Naive thymus-derived CD4-positive, alpha-beta T cell (primary cell): ENCODE measurements at regions of chr1 and their contacts with region 1.

Region 1: DNA sequence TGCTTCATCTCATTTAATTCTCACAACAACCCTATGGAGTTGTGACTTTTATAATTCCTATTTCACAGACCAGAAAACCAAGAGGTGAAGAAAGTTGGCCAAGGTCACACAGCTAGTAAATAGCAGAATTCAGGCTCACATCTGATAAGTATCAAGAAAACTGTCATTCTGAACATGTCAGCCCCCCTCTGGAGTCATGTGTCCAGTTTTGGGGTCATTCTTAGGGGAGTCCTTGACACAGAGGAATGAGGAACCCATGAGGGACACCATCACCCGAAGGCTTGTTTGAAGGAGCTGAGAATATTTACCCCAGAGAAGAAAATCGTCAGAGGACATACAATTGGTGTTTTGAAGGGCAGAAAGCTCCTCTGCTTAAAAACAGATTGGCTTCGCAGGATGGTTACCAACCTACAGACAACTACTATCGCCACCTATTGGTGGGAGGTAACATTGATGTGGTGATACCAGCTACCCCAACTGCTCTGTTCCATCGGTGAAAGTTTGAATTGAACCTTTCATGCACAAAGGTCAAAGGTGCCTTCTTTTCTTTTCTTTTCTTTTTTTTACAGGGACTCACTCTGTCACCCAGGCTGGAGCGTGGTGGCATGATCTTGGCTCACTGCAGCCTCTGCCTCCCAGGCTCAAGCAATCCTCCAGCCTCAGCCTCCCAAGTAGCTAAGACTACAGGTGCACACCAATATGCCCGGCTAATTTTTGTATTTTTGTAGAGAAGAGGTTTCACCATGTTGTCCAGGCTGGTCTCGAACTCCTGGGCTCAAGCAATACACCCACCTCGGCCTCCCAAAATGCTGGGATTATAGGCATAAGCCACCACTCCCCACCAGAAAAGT is 31.3 kb downstream of the NCMAP start:
- DNase-seq: peak in 8 of 9 donors; percentile 32 to 83 (median 76)
- ATAC-seq: peak; percentile 98
- H3K4me3 ChIP-seq: no peak overlapping the region
- H3K4me3 Mint-ChIP-seq: peak overlapping the region in 4 of 10 donors; percentile 12 to 38 (median 35)
- H3K27ac ChIP-seq: peak overlapping the region; percentile 35
- H3K27ac Mint-ChIP-seq: peak overlapping the region in 8 of 9 donors; percentile 78 to 93 (median 85)
- H3K4me1 ChIP-seq: peaks cover 0 to 7% of the 10 kb centered on the region in 2 donors
- H3K4me1 Mint-ChIP-seq: peaks cover 0 to 9% (median 7%) of the 10 kb centered on the region in 7 donors
- H3K27me3 ChIP-seq: no peaks in the 10 kb centered on the region
- H3K27me3 Mint-ChIP-seq: peaks cover 0 to 14% (median 0%) of the 10 kb centered on the region in 5 donors

Region 2: DNA sequence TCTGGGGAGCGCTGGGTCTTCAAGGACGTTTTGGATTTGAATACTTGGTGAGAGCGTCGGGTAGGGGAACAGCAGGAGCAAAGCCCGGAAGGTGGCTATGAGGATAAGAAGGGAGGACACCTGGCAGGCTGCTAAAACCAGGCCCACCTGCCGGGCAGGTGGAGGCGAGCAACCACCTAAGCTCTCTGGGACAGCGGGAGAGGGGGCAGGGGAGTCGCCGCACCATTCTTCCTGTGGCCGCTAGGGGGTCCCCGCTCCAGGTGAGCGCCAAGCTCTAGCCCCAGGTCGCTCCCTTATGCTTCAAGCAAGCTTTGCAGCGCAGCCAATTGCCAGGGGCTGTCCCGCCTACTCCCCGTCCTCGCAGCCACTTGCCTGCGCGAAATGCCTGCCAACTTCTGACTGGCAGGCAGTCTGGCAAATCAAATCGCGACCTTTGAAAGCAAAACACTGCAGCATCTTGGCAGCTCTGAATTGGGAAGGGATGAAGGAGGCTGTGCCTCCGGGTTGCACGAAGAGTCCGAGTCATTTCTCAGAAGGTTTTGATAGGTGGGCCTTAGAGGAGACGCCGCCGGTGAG is 171.8 kb before region 1 on chr1 and contains the start of gene NIPAL3:
- CTCF ChIA-PET with region 1: interaction called, 16 read pairs
- POLR2A ChIA-PET with region 1: interaction called, 6 read pairs
- intact Hi-C with region 1: loop called (anchors 1 kb)
- DNase-seq: peak; percentile 81 to 99 (median 97)
- ATAC-seq: peak; percentile 98
- H3K4me3 ChIP-seq: peak within 1 kb of the TSS; percentile 76
- H3K4me3 Mint-ChIP-seq: peak within 1 kb of the TSS; percentile 95 to 100 (median 98)
- H3K27ac ChIP-seq: peak within 1 kb of the TSS; percentile 74
- H3K27ac Mint-ChIP-seq: peak within 1 kb of the TSS; percentile 75 to 99 (median 90)
- H3K4me1 ChIP-seq: peaks cover 23 to 44% of the 10 kb centered on the region in 2 donors
- H3K4me1 Mint-ChIP-seq: peaks cover 51 to 91% (median 75%) of the 10 kb centered on the region in 7 donors
- H3K27me3 ChIP-seq: no peaks in the 10 kb centered on the region
- H3K27me3 Mint-ChIP-seq: no peaks in the 10 kb centered on the region
- total RNA-seq, gene NIPAL3: 35.5 to 65.0 (median 54.5) TPM

Region 3: DNA sequence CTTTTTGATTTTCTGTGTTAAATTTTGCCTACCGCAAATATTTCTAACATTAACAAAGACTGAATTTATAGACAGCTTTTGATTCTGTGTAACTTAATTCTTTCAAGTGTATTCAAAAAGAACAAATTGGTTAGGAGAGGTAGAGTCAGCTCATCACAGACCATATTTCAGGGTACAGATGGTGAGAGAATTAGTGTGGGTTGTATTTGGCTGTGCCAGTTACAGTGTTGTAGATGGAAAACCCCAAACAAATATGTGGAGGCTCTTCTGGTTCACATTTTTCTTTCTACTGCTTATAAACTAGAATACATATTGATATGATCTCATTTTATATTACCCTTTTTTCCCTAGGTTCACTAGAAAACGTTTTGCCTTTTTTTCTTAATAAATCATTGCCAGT is 73.5 kb before region 1 on chr1:
- CTCF ChIA-PET with region 1: interaction called, 4 read pairs
- POLR2A ChIA-PET with region 1: interaction called, 3 read pairs
- intact Hi-C with region 1: loop called in 1 of 2 experiments (anchors 2 kb)
- DNase-seq: no peak
- ATAC-seq: no peak
- H3K4me3 ChIP-seq: no peak overlapping the region
- H3K4me3 Mint-ChIP-seq: peak overlapping the region in 8 of 10 donors; percentile 48 to 84 (median 74)
- H3K27ac ChIP-seq: peak overlapping the region; percentile 62
- H3K27ac Mint-ChIP-seq: peak overlapping the region in 7 of 9 donors; percentile 76 to 93 (median 86)
- H3K4me1 ChIP-seq: peaks cover 34 to 79% of the 10 kb centered on the region in 2 donors
- H3K4me1 Mint-ChIP-seq: peaks cover 48 to 95% (median 81%) of the 10 kb centered on the region in 7 donors
- H3K27me3 ChIP-seq: no peaks in the 10 kb centered on the region
- H3K27me3 Mint-ChIP-seq: no peaks in the 10 kb centered on the region

Region 4: DNA sequence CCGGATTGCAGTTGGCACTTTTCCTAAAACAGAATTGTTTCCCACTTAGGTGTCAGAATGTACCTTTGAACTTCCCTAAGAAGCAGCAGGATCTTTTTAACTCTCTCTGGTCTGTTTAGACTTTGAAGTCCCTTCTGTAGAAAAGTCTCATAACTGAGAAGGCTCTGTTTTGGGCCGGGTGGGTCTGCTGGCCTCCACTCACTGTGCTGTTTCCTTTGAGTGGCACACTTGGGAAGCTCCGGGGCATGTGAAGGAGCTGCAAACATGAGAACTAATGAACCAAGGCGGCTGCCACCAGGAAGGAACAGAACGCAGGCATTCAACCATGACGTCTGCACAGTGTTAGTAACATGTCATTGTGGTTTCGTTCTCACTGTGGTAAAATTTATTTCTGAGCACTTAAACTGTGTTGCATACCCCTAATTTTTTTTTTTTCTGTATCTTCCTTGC is 50.8 kb before region 1 on chr1:
- CTCF ChIA-PET with region 1: interaction called, 6 read pairs
- POLR2A ChIA-PET with region 1: interaction called, 3 read pairs
- intact Hi-C with region 1: loop called (anchors 1 to 2 kb)
- DNase-seq: peak; percentile 41 to 92 (median 87)
- ATAC-seq: peak; percentile 90
- H3K4me3 ChIP-seq: no peak overlapping the region
- H3K4me3 Mint-ChIP-seq: peak overlapping the region; percentile 79 to 91 (median 84)
- H3K27ac ChIP-seq: peak overlapping the region; percentile 96
- H3K27ac Mint-ChIP-seq: peak overlapping the region; percentile 93 to 100 (median 99)
- H3K4me1 ChIP-seq: peaks cover 30 to 38% of the 10 kb centered on the region in 2 donors
- H3K4me1 Mint-ChIP-seq: peaks cover 29 to 90% (median 70%) of the 10 kb centered on the region in 7 donors
- H3K27me3 ChIP-seq: no peaks in the 10 kb centered on the region
- H3K27me3 Mint-ChIP-seq: no peaks in the 10 kb centered on the region

Region 5: GRCh38 chr1:24619376-24619775 is 32.2 kb after region 1 on chr1:
- CTCF ChIA-PET with region 1: no interaction called
- POLR2A ChIA-PET with region 1: no interaction called
- intact Hi-C with region 1: no loop called
- DNase-seq: no peak
- ATAC-seq: no peak
- H3K4me3 ChIP-seq: no peak overlapping the region
- H3K4me3 Mint-ChIP-seq: no peak overlapping the region
- H3K27ac ChIP-seq: no peak overlapping the region
- H3K27ac Mint-ChIP-seq: no peak overlapping the region
- H3K4me1 ChIP-seq: no peaks in the 10 kb centered on the region
- H3K4me1 Mint-ChIP-seq: no peaks in the 10 kb centered on the region
- H3K27me3 ChIP-seq: no peaks in the 10 kb centered on the region
- H3K27me3 Mint-ChIP-seq: peaks cover 0 to 60% (median 13%) of the 10 kb centered on the region in 5 donors

Region 6: GRCh38 chr1:24635195-24635843 is 48.1 kb after region 1 on chr1:
- CTCF ChIA-PET with region 1: interaction called, 5 read pairs
- POLR2A ChIA-PET with region 1: no interaction called
- intact Hi-C with region 1: loop called (anchors 1 to 5 kb)
- DNase-seq: peak in 7 of 9 donors; percentile 39 to 69 (median 62)
- ATAC-seq: peak; percentile 85
- H3K4me3 ChIP-seq: no peak overlapping the region
- H3K4me3 Mint-ChIP-seq: no peak overlapping the region
- H3K27ac ChIP-seq: no peak overlapping the region
- H3K27ac Mint-ChIP-seq: peak overlapping the region in 5 of 9 donors; percentile 0 to 77 (median 64)
- H3K4me1 ChIP-seq: no peaks in the 10 kb centered on the region
- H3K4me1 Mint-ChIP-seq: peaks cover 2 to 14% (median 8%) of the 10 kb centered on the region in 7 donors
- H3K27me3 ChIP-seq: no peaks in the 10 kb centered on the region
- H3K27me3 Mint-ChIP-seq: peaks cover 4 to 21% (median 8%) of the 10 kb centered on the region in 5 donors